Prostate gland (tissue), 2 donors: ENCODE measurements at regions of chr9 and their contacts with region 1.

Region 1: GRCh38 chr9:96217754-96218693 is 84.0 kb downstream of the HSD17B3 start:
- DNase-seq: peak; percentile 59
- H3K4me3 ChIP-seq: peak overlapping the region; percentile 4 to 15
- H3K27ac ChIP-seq: peak overlapping the region; percentile 46 to 58
- H3K4me1 ChIP-seq: no peaks in the 10 kb centered on the region
- H3K27me3 ChIP-seq: no peaks in the 10 kb centered on the region
- CTCF ChIP-seq: peak; percentile 98 to 99 (median 98)
- POLR2A ChIP-seq: no peak

Region 2: GRCh38 chr9:95516734-95517558 is 701.1 kb before region 1 on chr9 and contains the start of gene PTCH1:
- intact Hi-C with region 1: loop called (anchors 5 kb)
- DNase-seq: peak; percentile 69
- H3K4me3 ChIP-seq: peak within 1 kb of the TSS; percentile 52 to 56
- H3K27ac ChIP-seq: peak within 1 kb of the TSS; percentile 84 to 88
- H3K4me1 ChIP-seq: no peaks in the 10 kb centered on the region
- H3K27me3 ChIP-seq: no peaks in the 10 kb centered on the region
- CTCF ChIP-seq: no peak
- POLR2A ChIP-seq: no peak
- total RNA-seq, gene PTCH1: 27.5 to 108 TPM

Region 3: GRCh38 chr9:95732802-95733688 is 485.0 kb before region 1 on chr9:
- intact Hi-C with region 1: loop called (anchors 2 kb)
- DNase-seq: no peak
- H3K4me3 ChIP-seq: no peak overlapping the region
- H3K27ac ChIP-seq: no peak overlapping the region
- H3K4me1 ChIP-seq: no peaks in the 10 kb centered on the region
- H3K27me3 ChIP-seq: no peaks in the 10 kb centered on the region
- CTCF ChIP-seq: no peak
- POLR2A ChIP-seq: no peak

Region 4: GRCh38 chr9:96266282-96267210 is 48.5 kb after region 1 on chr9:
- intact Hi-C with region 1: no loop called
- DNase-seq: no peak
- H3K4me3 ChIP-seq: no peak overlapping the region
- H3K27ac ChIP-seq: no peak overlapping the region
- H3K4me1 ChIP-seq: no peaks in the 10 kb centered on the region
- H3K27me3 ChIP-seq: no peaks in the 10 kb centered on the region
- CTCF ChIP-seq: no peak
- POLR2A ChIP-seq: no peak

Region 5: GRCh38 chr9:96350866-96351265 is 132.8 kb after region 1 on chr9:
- intact Hi-C with region 1: no loop called
- DNase-seq: no peak
- H3K4me3 ChIP-seq: no peak overlapping the region
- H3K27ac ChIP-seq: no peak overlapping the region
- H3K4me1 ChIP-seq: no peaks in the 10 kb centered on the region
- H3K27me3 ChIP-seq: no peaks in the 10 kb centered on the region
- CTCF ChIP-seq: no peak
- POLR2A ChIP-seq: no peak